Naive thymus-derived CD4-positive, alpha-beta T cell (primary cell): ENCODE measurements at regions of chr19 and their contacts with region 1.

Region 1: DNA sequence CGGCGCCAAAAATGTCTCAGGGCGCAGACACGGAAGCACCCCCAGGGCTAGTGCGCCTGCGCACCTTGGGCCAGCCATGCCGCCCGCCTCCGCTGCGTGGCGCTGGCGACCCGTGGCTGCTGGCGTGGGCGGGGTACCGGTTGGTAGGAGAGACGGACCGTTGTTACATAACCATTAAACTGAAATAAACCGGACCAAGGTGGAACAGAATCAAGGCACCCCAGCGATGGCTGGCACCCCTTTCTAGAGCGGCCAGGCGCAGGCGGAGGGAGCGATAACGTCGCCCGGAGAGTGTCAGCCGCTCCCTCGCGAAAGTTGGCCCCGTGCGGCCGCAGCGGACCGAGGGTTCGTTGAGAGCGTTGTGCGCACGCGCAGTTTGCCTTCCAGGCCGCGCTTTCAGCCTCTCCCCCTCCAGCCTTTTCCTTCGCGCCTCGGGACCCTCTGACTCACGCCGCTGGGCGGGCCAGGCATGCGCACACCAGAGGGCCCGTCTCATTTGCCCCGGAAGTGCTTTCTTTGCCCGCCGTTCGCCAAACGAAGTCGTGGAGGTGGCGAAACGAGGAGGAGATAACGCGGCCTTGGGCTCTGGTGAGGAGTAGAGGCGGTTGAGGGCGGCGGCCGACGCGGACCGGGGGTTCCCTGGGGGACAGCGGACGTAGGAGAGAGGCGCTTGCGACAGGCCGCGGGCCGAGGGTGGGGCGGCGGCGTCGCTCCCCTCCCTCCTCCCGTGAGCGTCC is at the starts of genes PLEKHJ1 and SF3A2:
- DNase-seq: peak; percentile 96 to 100 (median 100)
- ATAC-seq: peak; percentile 90
- H3K4me3 ChIP-seq: peak within 1 kb of the TSS; percentile 75
- H3K4me3 Mint-ChIP-seq: peak within 1 kb of the TSS; percentile 96 to 100 (median 98)
- H3K27ac ChIP-seq: peak within 1 kb of the TSS; percentile 93
- H3K27ac Mint-ChIP-seq: peak within 1 kb of the TSS; percentile 96 to 99 (median 98)
- H3K4me1 ChIP-seq: peaks cover 42 to 50% of the 10 kb centered on the region in 2 donors
- H3K4me1 Mint-ChIP-seq: peaks cover 41 to 69% (median 57%) of the 10 kb centered on the region in 7 donors
- H3K27me3 ChIP-seq: no peaks in the 10 kb centered on the region
- H3K27me3 Mint-ChIP-seq: peaks cover 0 to 5% (median 0%) of the 10 kb centered on the region in 5 donors
- total RNA-seq, gene PLEKHJ1: 32.9 to 65.0 (median 50.2) TPM
- total RNA-seq, gene SF3A2: 131 to 150 (median 133) TPM

Region 2: GRCh38 chr19:2016041-2016807 is 220.3 kb before region 1 on chr19:
- CTCF ChIA-PET with region 1: no interaction called
- POLR2A ChIA-PET with region 1: no interaction called
- intact Hi-C with region 1: loop called in 1 of 2 experiments (anchors 1 kb)
- DNase-seq: peak in 7 of 9 donors; percentile 26 to 78 (median 56)
- ATAC-seq: peak; percentile 65
- H3K4me3 ChIP-seq: no peak overlapping the region
- H3K4me3 Mint-ChIP-seq: peak overlapping the region in 9 of 10 donors; percentile 48 to 79 (median 59)
- H3K27ac ChIP-seq: peak overlapping the region; percentile 37
- H3K27ac Mint-ChIP-seq: peak overlapping the region in 8 of 9 donors; percentile 29 to 81 (median 60)
- H3K4me1 ChIP-seq: no peaks in the 10 kb centered on the region
- H3K4me1 Mint-ChIP-seq: peaks cover 4 to 28% (median 16%) of the 10 kb centered on the region in 7 donors
- H3K27me3 ChIP-seq: no peaks in the 10 kb centered on the region
- H3K27me3 Mint-ChIP-seq: no peaks in the 10 kb centered on the region

Region 3: DNA sequence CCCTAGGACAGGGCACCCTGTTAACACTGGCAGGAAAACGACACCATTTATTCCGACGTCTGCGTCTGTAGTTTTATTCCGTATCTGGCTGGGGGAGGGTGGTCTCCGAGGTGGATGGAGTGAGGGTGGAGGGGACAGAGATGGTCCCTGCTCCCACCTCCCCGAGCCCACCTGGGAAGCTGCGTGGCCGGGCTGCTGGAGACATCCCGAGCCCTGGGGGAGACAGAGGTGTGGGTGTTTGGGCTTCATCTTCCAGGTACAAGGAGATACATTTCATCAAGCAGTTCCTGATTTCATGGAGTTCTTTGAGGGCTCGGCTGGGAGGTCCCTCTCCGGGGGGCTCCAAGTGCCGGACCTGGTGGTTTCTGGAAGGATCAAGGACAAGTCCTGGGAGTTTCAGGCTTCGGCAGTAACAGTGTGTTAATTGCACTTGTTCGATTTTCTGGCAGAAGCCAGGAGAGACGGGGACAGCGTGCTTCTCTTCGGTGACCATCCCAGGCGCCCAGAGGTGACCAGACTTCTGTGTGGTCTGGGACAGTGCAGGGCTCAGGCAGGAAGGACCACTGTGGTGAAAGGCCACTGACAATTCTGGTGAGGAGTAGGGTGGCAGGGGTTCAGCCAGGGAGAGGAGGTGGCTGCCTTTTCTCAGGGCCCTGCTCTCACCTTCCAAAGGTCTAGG is 165.4 kb before region 1 on chr19:
- CTCF ChIA-PET with region 1: no interaction called
- POLR2A ChIA-PET with region 1: no interaction called
- intact Hi-C with region 1: no loop called
- DNase-seq: no peak
- ATAC-seq: no peak
- H3K4me3 ChIP-seq: no peak overlapping the region
- H3K4me3 Mint-ChIP-seq: peak overlapping the region in 1 of 10 donors; percentile 39
- H3K27ac ChIP-seq: peak overlapping the region; percentile 53
- H3K27ac Mint-ChIP-seq: peak overlapping the region; percentile 30 to 88 (median 82)
- H3K4me1 ChIP-seq: peaks cover 0 to 10% of the 10 kb centered on the region in 2 donors
- H3K4me1 Mint-ChIP-seq: peaks cover 13 to 42% (median 22%) of the 10 kb centered on the region in 7 donors
- H3K27me3 ChIP-seq: no peaks in the 10 kb centered on the region
- H3K27me3 Mint-ChIP-seq: no peaks in the 10 kb centered on the region

Region 4: GRCh38 chr19:2261438-2262172 is 25.1 kb after region 1 on chr19:
- CTCF ChIA-PET with region 1: interaction called, 25 read pairs
- POLR2A ChIA-PET with region 1: interaction called, 163 read pairs
- intact Hi-C with region 1: loop called (anchors 1 to 2 kb)
- DNase-seq: peak in 3 of 9 donors; percentile 34 to 60 (median 46)
- ATAC-seq: no peak
- H3K4me3 ChIP-seq: no peak overlapping the region
- H3K4me3 Mint-ChIP-seq: no peak overlapping the region
- H3K27ac ChIP-seq: no peak overlapping the region
- H3K27ac Mint-ChIP-seq: peak overlapping the region in 2 of 9 donors; percentile 63 to 83
- H3K4me1 ChIP-seq: peaks cover 32% of the 10 kb centered on the region in 2 donors
- H3K4me1 Mint-ChIP-seq: peaks cover 5 to 40% (median 33%) of the 10 kb centered on the region in 7 donors
- H3K27me3 ChIP-seq: no peaks in the 10 kb centered on the region
- H3K27me3 Mint-ChIP-seq: no peaks in the 10 kb centered on the region

Region 5: DNA sequence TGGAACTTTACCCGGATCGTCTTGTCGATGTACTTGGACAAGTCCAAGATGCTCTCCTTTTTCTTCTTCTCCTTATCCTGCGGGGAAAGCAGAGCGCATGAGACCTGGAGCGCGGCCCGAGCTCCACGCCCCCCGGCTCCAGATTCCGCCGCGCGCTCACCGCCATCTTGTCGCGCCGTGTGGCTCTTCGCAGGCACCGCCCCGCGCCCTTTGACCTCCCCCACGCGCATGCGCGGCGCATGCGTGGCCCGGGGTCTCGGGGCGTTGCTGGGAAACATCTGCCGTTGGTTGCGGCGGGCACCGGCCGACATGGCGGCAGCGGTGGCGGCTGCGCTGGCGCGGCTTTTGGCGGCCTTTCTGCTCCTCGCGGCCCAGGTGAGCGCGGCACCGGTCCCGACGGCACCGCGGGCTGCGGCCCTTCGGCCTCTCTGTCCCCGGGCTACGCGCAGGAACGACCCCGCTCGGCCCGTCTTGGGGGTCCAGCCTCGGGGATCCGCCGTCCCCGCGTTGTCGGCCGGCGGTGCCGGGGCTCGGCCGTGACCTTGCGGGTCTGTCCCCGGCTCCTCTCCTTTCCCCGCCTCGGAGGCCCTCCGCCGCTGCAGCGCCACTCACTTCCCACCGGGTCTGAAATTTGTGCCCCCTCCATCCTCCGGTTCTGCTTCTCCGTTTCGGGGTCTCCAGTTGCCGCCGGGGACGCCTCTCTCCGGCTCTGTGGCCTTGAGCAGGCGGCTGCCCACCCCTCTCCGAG is 92.1 kb after region 1 on chr19 and contains the starts of genes LSM7 and SPPL2B:
- CTCF ChIA-PET with region 1: interaction called, 3 read pairs
- POLR2A ChIA-PET with region 1: interaction called, 4 read pairs
- intact Hi-C with region 1: loop called (anchors 1 kb)
- DNase-seq: peak; percentile 87 to 95 (median 91)
- ATAC-seq: peak; percentile 85
- H3K4me3 ChIP-seq: peak within 1 kb of the TSS; percentile 95
- H3K4me3 Mint-ChIP-seq: peak within 1 kb of the TSS; percentile 94 to 100 (median 98)
- H3K27ac ChIP-seq: peak within 1 kb of the TSS; percentile 93
- H3K27ac Mint-ChIP-seq: peak within 1 kb of the TSS; percentile 91 to 100 (median 99)
- H3K4me1 ChIP-seq: peaks cover 10 to 48% of the 10 kb centered on the region in 2 donors
- H3K4me1 Mint-ChIP-seq: peaks cover 35 to 80% (median 62%) of the 10 kb centered on the region in 7 donors
- H3K27me3 ChIP-seq: no peaks in the 10 kb centered on the region
- H3K27me3 Mint-ChIP-seq: peaks cover 0 to 2% (median 0%) of the 10 kb centered on the region in 5 donors
- total RNA-seq, gene LSM7: 79.4 to 131 (median 102) TPM
- total RNA-seq, gene SPPL2B: 92.2 to 150 (median 140) TPM

Region 6: DNA sequence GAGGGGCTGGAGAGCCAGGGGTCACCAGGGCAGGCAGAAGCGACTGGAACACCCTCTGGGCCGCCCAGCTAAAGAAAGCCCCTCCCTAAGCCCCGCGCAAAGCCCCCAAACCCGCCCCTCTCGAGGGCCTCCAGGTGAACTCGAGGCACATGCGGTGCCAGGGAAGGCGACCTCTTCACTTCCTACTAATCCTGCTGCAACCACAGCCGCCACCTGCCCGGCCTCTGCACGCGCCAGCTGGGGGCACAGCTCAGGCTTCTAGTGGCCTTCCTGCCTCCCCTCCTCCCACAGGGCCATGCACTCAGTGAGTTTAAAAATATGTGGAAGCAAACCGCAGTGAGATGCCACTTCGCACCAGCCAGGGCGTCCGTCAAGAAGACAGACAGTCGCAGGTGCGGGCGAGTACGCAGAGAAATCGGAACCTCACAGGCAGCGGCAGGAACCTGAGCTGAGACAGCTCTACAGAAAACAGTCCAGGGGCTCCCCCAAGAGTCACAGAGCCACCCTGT is 209.8 kb after region 1 on chr19:
- CTCF ChIA-PET with region 1: no interaction called
- POLR2A ChIA-PET with region 1: no interaction called
- intact Hi-C with region 1: loop called in 1 of 2 experiments (anchors 1 kb)
- DNase-seq: peak in 7 of 9 donors; percentile 21 to 60 (median 40)
- ATAC-seq: peak; percentile 74
- H3K4me3 ChIP-seq: peak overlapping the region; percentile 29
- H3K4me3 Mint-ChIP-seq: peak overlapping the region; percentile 70 to 87 (median 80)
- H3K27ac ChIP-seq: peak overlapping the region; percentile 29
- H3K27ac Mint-ChIP-seq: peak overlapping the region; percentile 29 to 91 (median 76)
- H3K4me1 ChIP-seq: no peaks in the 10 kb centered on the region
- H3K4me1 Mint-ChIP-seq: peaks cover 5 to 20% (median 13%) of the 10 kb centered on the region in 7 donors
- H3K27me3 ChIP-seq: no peaks in the 10 kb centered on the region
- H3K27me3 Mint-ChIP-seq: no peaks in the 10 kb centered on the region

Region 7: DNA sequence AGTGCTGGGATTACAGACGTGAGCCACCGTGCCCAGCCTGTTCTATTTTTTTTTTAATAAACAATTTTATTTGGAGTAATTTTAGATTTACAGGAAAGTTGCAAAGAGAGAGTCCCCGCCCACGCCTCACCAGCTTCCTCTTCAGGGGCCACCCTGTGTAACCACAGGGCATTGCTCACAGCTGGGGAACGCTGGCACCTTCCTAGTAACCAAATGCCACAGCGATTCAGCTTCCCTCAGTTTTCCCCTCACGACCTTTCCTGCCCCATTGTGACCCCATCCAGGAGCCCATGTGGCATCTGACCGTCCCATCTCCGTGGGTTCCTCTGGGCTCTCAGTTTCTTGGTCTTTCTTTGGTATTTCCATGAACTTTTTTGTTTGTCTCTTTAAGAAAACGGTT is 382.1 kb after region 1 on chr19:
- CTCF ChIA-PET with region 1: interaction called, 3 read pairs
- POLR2A ChIA-PET with region 1: interaction called, 3 read pairs
- intact Hi-C with region 1: loop called in 1 of 2 experiments (anchors 1 kb)
- DNase-seq: peak in 8 of 9 donors; percentile 46 to 71 (median 60)
- ATAC-seq: peak; percentile 62
- H3K4me3 ChIP-seq: peak overlapping the region; percentile 34
- H3K4me3 Mint-ChIP-seq: peak overlapping the region; percentile 71 to 89 (median 82)
- H3K27ac ChIP-seq: peak overlapping the region; percentile 71
- H3K27ac Mint-ChIP-seq: peak overlapping the region; percentile 85 to 97 (median 93)
- H3K4me1 ChIP-seq: peaks cover 51 to 61% of the 10 kb centered on the region in 2 donors
- H3K4me1 Mint-ChIP-seq: peaks cover 37 to 71% (median 63%) of the 10 kb centered on the region in 7 donors
- H3K27me3 ChIP-seq: no peaks in the 10 kb centered on the region
- H3K27me3 Mint-ChIP-seq: peaks cover 0 to 3% (median 0%) of the 10 kb centered on the region in 5 donors